Left cardiac atrium (tissue), 4 donors: ENCODE measurements at regions of chr16 and their contacts with region 1.

Region 1: GRCh38 chr16:636206-637080 is at the start of gene METTL26:
- DNase-seq: peak; percentile 98
- ATAC-seq: peak; percentile 89 to 90
- total RNA-seq, gene METTL26: 42.8 to 61.8 TPM

Region 2: GRCh38 chr16:589658-590159 is 46.7 kb before region 1 on chr16 and contains the start of gene RAB40C:
- intact Hi-C with region 1: loop called in 1 of 2 experiments (anchors 5 kb)
- DNase-seq: peak; percentile 100
- ATAC-seq: peak; percentile 93 to 95
- total RNA-seq, gene RAB40C: 9.9 to 13.5 TPM